Naive thymus-derived CD4-positive, alpha-beta T cell (primary cell): ENCODE measurements at regions of chr18 and their contacts with region 1.

Region 1: DNA sequence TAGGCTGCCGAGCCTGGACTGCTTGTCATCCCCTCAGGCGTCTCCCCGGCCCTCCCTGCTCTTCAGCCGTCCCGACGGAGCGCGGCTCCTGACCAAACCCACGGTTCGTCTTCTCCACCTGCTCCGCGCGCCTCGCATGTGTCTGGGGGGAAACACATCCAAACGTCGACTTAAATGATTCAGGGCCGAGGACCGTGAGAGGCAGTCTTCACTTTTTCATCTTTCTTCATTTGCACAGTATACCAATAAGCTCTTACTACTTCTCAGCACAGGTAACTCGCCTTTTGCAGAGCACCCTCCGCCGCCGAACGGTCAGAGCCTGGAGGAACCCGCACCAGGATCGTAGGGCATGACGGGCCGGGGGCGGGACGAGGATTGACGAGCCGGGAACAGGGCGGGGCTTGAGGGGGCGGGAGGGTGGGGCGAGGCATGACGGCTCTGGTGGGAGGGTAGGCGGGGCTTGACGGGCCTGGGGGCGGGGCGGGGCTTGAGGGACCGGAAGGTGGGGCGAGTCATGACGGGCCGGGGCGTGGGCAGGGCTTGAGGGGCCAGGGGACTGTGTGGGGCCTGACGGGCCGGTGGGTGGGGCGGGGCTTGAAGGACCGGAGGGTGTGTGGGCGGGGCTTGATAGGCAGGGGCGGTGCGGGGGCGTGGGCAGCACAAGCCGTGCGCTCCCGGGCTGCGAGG is at the start of gene SEH1L:
- DNase-seq: peak in 7 of 9 donors; percentile 95 to 99 (median 97)
- ATAC-seq: peak; percentile 94
- H3K4me3 ChIP-seq: peak within 1 kb of the TSS; percentile 78
- H3K4me3 Mint-ChIP-seq: peak within 1 kb of the TSS; percentile 89 to 98 (median 95)
- H3K27ac ChIP-seq: peak within 1 kb of the TSS; percentile 92
- H3K27ac Mint-ChIP-seq: peak within 1 kb of the TSS; percentile 93 to 99 (median 97)
- H3K4me1 ChIP-seq: peaks cover 13 to 15% of the 10 kb centered on the region in 2 donors
- H3K4me1 Mint-ChIP-seq: peaks cover 15 to 51% (median 42%) of the 10 kb centered on the region in 7 donors
- H3K27me3 ChIP-seq: no peaks in the 10 kb centered on the region
- H3K27me3 Mint-ChIP-seq: no peaks in the 10 kb centered on the region
- total RNA-seq, gene SEH1L: 32.7 to 54.2 (median 34.2) TPM

Region 2: DNA sequence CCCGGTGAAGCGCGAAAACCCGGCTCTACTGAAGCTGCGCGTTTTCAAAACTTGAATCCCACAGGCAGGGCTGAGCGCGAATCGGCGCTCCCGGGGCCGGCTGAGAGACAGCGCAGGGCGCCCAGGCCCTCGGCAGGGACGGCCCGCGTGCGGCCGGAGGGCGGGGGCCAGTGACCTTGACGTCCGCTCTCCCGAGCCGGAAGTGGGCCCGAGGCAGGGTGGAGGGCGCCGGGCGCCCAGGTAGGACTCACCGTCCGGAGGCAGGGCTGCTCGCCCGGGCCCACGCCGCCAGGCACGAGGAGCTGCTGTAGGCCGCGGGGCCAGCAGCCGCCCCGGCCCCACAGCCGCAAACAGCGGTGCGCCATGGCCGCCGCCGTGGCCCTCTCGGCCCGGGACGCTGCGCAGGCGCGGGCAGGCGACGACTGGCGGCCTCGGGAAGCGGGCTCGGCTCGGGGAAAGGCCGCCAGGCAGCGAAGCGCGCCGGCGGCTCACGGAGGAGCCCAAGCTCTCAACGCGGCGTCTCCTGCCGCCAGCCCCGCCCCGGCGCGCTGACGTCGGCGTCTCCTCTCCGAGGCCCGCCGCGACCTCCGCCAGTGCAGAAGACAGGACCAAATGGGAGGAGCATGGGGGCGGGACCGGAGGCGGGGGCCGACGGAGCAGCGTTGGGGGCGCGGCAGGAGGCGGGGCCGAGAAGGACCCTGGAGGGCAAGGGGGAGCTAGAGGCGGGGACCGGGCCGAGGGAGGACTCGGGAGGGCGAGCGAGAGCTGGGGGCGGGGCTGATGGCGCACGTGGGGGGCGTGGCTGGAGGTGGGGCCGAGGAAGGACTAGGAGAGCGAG is 570.6 kb before region 1 on chr18 and contains the start of gene AFG3L2:
- CTCF ChIA-PET with region 1: no interaction called
- POLR2A ChIA-PET with region 1: interaction called, 16 read pairs
- intact Hi-C with region 1: loop called (anchors 1 kb)
- DNase-seq: peak; percentile 99 to 100 (median 100)
- ATAC-seq: peak; percentile 93
- H3K4me3 ChIP-seq: peak within 1 kb of the TSS; percentile 93
- H3K4me3 Mint-ChIP-seq: peak within 1 kb of the TSS; percentile 85 to 93 (median 92)
- H3K27ac ChIP-seq: peak within 1 kb of the TSS; percentile 97
- H3K27ac Mint-ChIP-seq: peak within 1 kb of the TSS; percentile 77 to 95 (median 90)
- H3K4me1 ChIP-seq: peaks cover 13 to 28% of the 10 kb centered on the region in 2 donors
- H3K4me1 Mint-ChIP-seq: peaks cover 32 to 52% (median 46%) of the 10 kb centered on the region in 7 donors
- H3K27me3 ChIP-seq: no peaks in the 10 kb centered on the region
- H3K27me3 Mint-ChIP-seq: peaks cover 0 to 22% (median 0%) of the 10 kb centered on the region in 5 donors
- total RNA-seq, gene AFG3L2: 26.3 to 42.3 (median 32.0) TPM

Region 3: GRCh38 chr18:12838178-12838634 is 109.3 kb before region 1 on chr18:
- CTCF ChIA-PET with region 1: no interaction called
- POLR2A ChIA-PET with region 1: no interaction called
- intact Hi-C with region 1: loop called in 1 of 2 experiments (anchors 2 kb)
- DNase-seq: peak in 1 of 9 donors; percentile 28
- ATAC-seq: no peak
- H3K4me3 ChIP-seq: peak overlapping the region; percentile 15
- H3K4me3 Mint-ChIP-seq: peak overlapping the region; percentile 26 to 86 (median 54)
- H3K27ac ChIP-seq: no peak overlapping the region
- H3K27ac Mint-ChIP-seq: peak overlapping the region; percentile 28 to 98 (median 57)
- H3K4me1 ChIP-seq: peaks cover 31 to 34% of the 10 kb centered on the region in 2 donors
- H3K4me1 Mint-ChIP-seq: peaks cover 31 to 67% (median 57%) of the 10 kb centered on the region in 7 donors
- H3K27me3 ChIP-seq: no peaks in the 10 kb centered on the region
- H3K27me3 Mint-ChIP-seq: no peaks in the 10 kb centered on the region

Region 4: GRCh38 chr18:12911025-12911928 is 36.2 kb before region 1 on chr18:
- CTCF ChIA-PET with region 1: no interaction called
- POLR2A ChIA-PET with region 1: no interaction called
- intact Hi-C with region 1: loop called in 1 of 2 experiments (anchors 1 kb)
- DNase-seq: peak; percentile 34 to 65 (median 50)
- ATAC-seq: peak; percentile 89
- H3K4me3 ChIP-seq: peak overlapping the region; percentile 62
- H3K4me3 Mint-ChIP-seq: peak overlapping the region; percentile 25 to 81 (median 74)
- H3K27ac ChIP-seq: no peak overlapping the region
- H3K27ac Mint-ChIP-seq: peak overlapping the region in 5 of 9 donors; percentile 12 to 68 (median 62)
- H3K4me1 ChIP-seq: peaks cover 0 to 10% of the 10 kb centered on the region in 2 donors
- H3K4me1 Mint-ChIP-seq: peaks cover 3 to 14% (median 6%) of the 10 kb centered on the region in 7 donors
- H3K27me3 ChIP-seq: no peaks in the 10 kb centered on the region
- H3K27me3 Mint-ChIP-seq: peaks cover 0 to 30% (median 0%) of the 10 kb centered on the region in 5 donors

Region 5: GRCh38 chr18:13137670-13138419 is 190.3 kb after region 1 on chr18:
- CTCF ChIA-PET with region 1: no interaction called
- POLR2A ChIA-PET with region 1: interaction called, 5 read pairs
- intact Hi-C with region 1: loop called (anchors 1 to 2 kb)
- DNase-seq: peak; percentile 26 to 86 (median 77)
- ATAC-seq: peak; percentile 94
- H3K4me3 ChIP-seq: peak overlapping the region; percentile 83
- H3K4me3 Mint-ChIP-seq: peak overlapping the region; percentile 92 to 100 (median 99)
- H3K27ac ChIP-seq: peak overlapping the region; percentile 75
- H3K27ac Mint-ChIP-seq: peak overlapping the region; percentile 93 to 98 (median 97)
- H3K4me1 ChIP-seq: peaks cover 0 to 7% of the 10 kb centered on the region in 2 donors
- H3K4me1 Mint-ChIP-seq: peaks cover 12 to 32% (median 28%) of the 10 kb centered on the region in 7 donors
- H3K27me3 ChIP-seq: no peaks in the 10 kb centered on the region
- H3K27me3 Mint-ChIP-seq: peaks cover 0 to 22% (median 0%) of the 10 kb centered on the region in 5 donors

Region 6: GRCh38 chr18:13726232-13726971 is 778.9 kb after region 1 on chr18 and contains the starts of genes FAM210A and RNMT:
- CTCF ChIA-PET with region 1: no interaction called
- POLR2A ChIA-PET with region 1: no interaction called
- intact Hi-C with region 1: loop called in 1 of 2 experiments (anchors 1 kb)
- DNase-seq: peak; percentile 82 to 95 (median 93)
- ATAC-seq: peak; percentile 96
- H3K4me3 ChIP-seq: peak within 1 kb of the TSS; percentile 95
- H3K4me3 Mint-ChIP-seq: peak within 1 kb of the TSS; percentile 85 to 97 (median 90)
- H3K27ac ChIP-seq: peak within 1 kb of the TSS; percentile 98
- H3K27ac Mint-ChIP-seq: peak within 1 kb of the TSS; percentile 82 to 99 (median 96)
- H3K4me1 ChIP-seq: peaks cover 17 to 38% of the 10 kb centered on the region in 2 donors
- H3K4me1 Mint-ChIP-seq: peaks cover 43 to 69% (median 60%) of the 10 kb centered on the region in 7 donors
- H3K27me3 ChIP-seq: no peaks in the 10 kb centered on the region
- H3K27me3 Mint-ChIP-seq: no peaks in the 10 kb centered on the region
- total RNA-seq, gene FAM210A: 5.9 to 31.5 (median 8.1) TPM
- total RNA-seq, gene RNMT: 47.0 to 101 (median 53.7) TPM